Activated T-helper 1 cell treated with anti-CD3 and anti-CD28 coated beads, Interleukin-12 subunit alpha, Interleukin-12 subunit beta, Interleukin-2, Interleukin-4 antibody, amounts not matched to agents 30 ng/mL and 10 ng/mL and 1 ng/mL, durations not matched to agents 14 hours and 24 hours and 36 hours (primary cell): ENCODE measurements at regions of chr5 and their contacts with region 1.

Region 1: GRCh38 chr5:54719384-54720283 is 202.1 kb downstream of the SNX18 start:
- DNase-seq: no peak
- H3K4me3 Mint-ChIP-seq: no peak overlapping the region
- H3K27ac Mint-ChIP-seq: peak overlapping the region; percentile 80
- H3K4me1 Mint-ChIP-seq: peaks cover 46% of the 10 kb centered on the region
- H3K27me3 Mint-ChIP-seq: no peaks in the 10 kb centered on the region

Region 2: DNA sequence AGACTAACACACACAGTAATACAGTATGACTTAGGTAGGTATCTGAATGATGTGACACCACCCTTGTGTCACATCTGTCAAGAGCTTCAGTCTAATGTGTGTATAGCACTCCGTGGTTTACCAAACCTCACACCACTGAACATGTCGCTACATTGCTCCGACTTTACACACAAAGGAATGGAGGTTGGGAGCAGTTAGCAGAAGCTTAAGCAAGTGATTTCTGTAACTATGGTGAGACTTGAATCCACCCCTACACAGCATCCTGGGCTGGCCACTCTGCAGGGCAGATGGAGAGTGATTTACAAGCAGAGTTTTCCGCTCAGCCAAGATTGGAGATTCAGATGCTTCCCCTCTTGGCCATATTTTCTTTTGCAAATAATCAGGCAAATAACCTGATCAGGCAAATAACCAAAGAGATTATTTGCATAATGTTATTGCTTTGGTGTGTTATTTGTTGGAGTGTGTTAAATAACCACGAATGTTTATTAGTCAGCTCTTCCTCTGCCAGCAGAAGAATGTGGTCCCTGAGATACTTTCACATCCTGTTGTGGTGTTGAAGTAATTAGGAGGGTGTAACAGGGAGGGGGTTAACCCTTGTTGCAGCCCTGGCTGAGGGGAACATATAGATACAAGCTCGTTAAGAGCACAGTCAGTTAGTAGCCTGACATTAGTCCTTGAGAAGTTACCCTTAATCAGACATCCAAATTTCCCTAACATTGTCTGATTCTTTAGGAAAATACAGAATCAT is 109.3 kb before region 1 on chr5:
- intact Hi-C with region 1: loop called (anchors 1 kb)
- DNase-seq: peak; percentile 41
- H3K4me3 Mint-ChIP-seq: peak overlapping the region; percentile 68
- H3K27ac Mint-ChIP-seq: peak overlapping the region; percentile 92
- H3K4me1 Mint-ChIP-seq: peaks cover 27% of the 10 kb centered on the region
- H3K27me3 Mint-ChIP-seq: peaks cover 3% of the 10 kb centered on the region

Region 3: GRCh38 chr5:54673523-54674225 is 46.0 kb before region 1 on chr5:
- intact Hi-C with region 1: loop called (anchors 5 kb)
- DNase-seq: peak; percentile 41
- H3K4me3 Mint-ChIP-seq: peak overlapping the region; percentile 54
- H3K27ac Mint-ChIP-seq: peak overlapping the region; percentile 77
- H3K4me1 Mint-ChIP-seq: peaks cover 78% of the 10 kb centered on the region
- H3K27me3 Mint-ChIP-seq: no peaks in the 10 kb centered on the region

Region 4: GRCh38 chr5:54703133-54703532 is 16.5 kb before region 1 on chr5:
- intact Hi-C with region 1: no loop called
- DNase-seq: no peak
- H3K4me3 Mint-ChIP-seq: no peak overlapping the region
- H3K27ac Mint-ChIP-seq: no peak overlapping the region
- H3K4me1 Mint-ChIP-seq: peaks cover 31% of the 10 kb centered on the region
- H3K27me3 Mint-ChIP-seq: peaks cover 10% of the 10 kb centered on the region

Region 5: DNA sequence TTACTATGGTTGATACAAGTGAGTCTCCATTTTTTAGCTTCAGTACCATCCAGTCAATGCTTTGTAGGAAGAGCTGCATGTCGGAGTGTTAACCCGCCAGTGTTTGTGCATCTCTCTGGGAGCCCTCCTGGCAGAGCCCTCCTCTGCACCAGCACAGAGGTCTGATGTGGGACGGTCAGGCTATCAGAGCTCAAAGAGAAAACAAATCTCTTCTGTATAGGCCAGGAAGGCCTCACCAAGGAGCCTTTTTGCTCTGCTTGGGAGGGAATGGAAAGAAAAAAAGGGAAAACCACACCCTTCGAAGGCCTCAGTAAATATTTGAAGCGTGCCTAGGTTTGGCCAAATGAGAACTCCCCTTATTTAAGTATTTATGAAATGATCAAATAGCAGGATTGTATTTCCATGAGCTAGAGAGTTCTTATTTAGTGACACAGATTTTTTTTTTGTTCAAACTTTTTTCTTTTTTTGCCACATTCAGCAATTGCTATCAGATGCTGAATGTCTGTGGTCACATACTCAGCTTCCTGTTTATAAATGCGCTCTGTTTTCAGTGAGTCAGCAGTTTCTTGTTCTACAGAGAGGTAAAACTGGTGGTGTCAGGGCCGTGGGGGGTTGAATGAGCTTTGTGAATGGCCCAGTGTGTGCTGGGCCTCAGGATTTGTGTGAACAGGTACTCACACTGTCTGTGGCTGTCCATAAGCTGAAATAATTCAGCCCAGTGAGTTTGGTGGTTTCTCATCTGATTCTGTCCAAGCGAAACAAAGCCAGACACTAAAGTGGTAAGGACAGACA is 24.6 kb after region 1 on chr5:
- intact Hi-C with region 1: loop called (anchors 1 kb)
- DNase-seq: peak; percentile 63
- H3K4me3 Mint-ChIP-seq: peak overlapping the region; percentile 50
- H3K27ac Mint-ChIP-seq: peak overlapping the region; percentile 87
- H3K4me1 Mint-ChIP-seq: peaks cover 20% of the 10 kb centered on the region
- H3K27me3 Mint-ChIP-seq: no peaks in the 10 kb centered on the region

Region 6: DNA sequence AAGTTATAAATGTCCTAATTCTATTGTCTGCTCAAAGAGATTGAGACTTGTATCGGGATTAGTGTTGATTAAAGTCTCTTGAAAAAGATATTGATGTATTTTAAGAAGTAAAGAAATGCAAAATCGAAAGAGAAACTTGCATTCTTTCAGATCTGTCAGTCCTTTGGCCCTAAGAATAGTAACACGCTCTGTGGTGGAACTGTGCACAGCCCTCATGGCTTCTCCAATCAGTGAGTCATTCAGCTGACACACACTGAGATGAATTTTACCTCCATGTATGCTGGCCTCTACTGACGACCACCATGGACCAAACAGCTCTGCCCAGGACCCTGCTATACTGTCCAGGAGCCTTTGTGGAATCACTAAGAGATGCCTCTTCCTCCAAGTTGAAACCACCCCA is 33.4 kb after region 1 on chr5:
- intact Hi-C with region 1: loop called (anchors 2 kb)
- DNase-seq: peak; percentile 42
- H3K4me3 Mint-ChIP-seq: peak overlapping the region; percentile 47
- H3K27ac Mint-ChIP-seq: peak overlapping the region; percentile 80
- H3K4me1 Mint-ChIP-seq: peaks cover 55% of the 10 kb centered on the region
- H3K27me3 Mint-ChIP-seq: no peaks in the 10 kb centered on the region

Region 7: GRCh38 chr5:54792611-54793404 is 73.2 kb after region 1 on chr5:
- intact Hi-C with region 1: loop called (anchors 1 kb)
- DNase-seq: no peak
- H3K4me3 Mint-ChIP-seq: peak overlapping the region; percentile 32
- H3K27ac Mint-ChIP-seq: peak overlapping the region; percentile 91
- H3K4me1 Mint-ChIP-seq: peaks cover 47% of the 10 kb centered on the region
- H3K27me3 Mint-ChIP-seq: peaks cover 3% of the 10 kb centered on the region

Region 8: DNA sequence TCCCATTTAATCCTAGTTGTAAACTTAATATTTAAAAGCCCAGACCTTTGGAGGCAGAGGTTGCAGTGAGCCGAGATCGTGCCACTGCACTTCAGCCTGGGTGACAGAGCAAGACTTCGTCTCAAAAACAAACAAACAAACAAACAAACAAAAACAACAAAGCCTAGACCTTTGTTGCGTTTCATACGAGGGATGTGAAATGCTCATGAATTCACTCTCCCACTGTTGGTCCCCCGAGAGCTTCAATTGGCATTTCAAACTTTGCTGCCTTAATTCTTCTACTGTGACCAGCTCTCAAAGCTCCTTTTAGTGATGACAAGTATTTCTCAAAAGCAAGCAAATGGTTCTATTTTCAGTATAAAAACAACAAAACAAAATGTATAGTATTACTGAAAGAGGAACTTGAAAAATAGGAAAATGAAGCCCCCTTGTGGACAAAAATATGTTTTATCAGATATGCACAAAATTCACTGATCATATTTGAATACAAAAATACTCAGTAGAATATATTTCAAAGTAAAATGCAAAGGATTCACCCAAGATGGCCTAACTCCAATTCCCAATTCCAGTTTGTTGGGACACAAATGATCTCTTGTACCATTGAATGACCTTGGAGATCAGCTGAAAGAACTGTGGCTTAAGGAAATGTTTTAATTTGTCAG is 125.4 kb after region 1 on chr5:
- intact Hi-C with region 1: loop called (anchors 1 kb)
- DNase-seq: no peak
- H3K4me3 Mint-ChIP-seq: no peak overlapping the region
- H3K27ac Mint-ChIP-seq: peak overlapping the region; percentile 59
- H3K4me1 Mint-ChIP-seq: peaks cover 32% of the 10 kb centered on the region
- H3K27me3 Mint-ChIP-seq: peaks cover 14% of the 10 kb centered on the region

Region 9: GRCh38 chr5:54996466-54996865 is 276.8 kb after region 1 on chr5:
- intact Hi-C with region 1: no loop called
- DNase-seq: no peak
- H3K4me3 Mint-ChIP-seq: no peak overlapping the region
- H3K27ac Mint-ChIP-seq: no peak overlapping the region
- H3K4me1 Mint-ChIP-seq: peaks cover 16% of the 10 kb centered on the region
- H3K27me3 Mint-ChIP-seq: no peaks in the 10 kb centered on the region

Region 10: DNA sequence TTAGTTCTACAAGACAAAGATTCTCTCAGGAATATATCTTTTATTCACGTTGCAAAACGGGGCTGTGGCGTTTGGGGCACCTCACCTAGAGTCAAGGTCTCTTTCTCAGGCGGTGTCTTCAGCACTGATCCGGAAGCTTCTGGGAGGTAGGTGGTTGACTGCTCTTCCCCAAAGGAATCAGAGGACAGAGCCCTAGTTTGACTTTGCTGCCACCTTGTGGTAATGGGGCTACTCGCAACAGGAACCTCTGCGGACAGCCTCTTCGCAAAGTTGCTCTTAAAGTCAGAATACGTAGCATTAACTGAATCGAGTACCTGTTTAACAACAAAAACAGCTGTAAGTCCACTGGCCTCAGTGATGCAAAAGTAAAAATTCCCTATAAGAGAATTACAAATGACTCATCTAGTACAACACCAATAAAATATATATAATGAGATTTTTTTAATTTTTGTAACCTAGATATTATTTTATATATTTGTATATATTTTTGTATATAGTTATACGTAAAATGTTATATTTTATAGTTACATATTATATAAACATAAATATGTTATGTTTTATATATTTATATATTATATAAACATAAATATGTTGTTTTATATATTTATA is 427.0 kb after region 1 on chr5:
- intact Hi-C with region 1: no loop called
- DNase-seq: peak; percentile 82
- H3K4me3 Mint-ChIP-seq: peak overlapping the region; percentile 20
- H3K27ac Mint-ChIP-seq: no peak overlapping the region
- H3K4me1 Mint-ChIP-seq: peaks cover 31% of the 10 kb centered on the region
- H3K27me3 Mint-ChIP-seq: peaks cover 17% of the 10 kb centered on the region

Region 11: DNA sequence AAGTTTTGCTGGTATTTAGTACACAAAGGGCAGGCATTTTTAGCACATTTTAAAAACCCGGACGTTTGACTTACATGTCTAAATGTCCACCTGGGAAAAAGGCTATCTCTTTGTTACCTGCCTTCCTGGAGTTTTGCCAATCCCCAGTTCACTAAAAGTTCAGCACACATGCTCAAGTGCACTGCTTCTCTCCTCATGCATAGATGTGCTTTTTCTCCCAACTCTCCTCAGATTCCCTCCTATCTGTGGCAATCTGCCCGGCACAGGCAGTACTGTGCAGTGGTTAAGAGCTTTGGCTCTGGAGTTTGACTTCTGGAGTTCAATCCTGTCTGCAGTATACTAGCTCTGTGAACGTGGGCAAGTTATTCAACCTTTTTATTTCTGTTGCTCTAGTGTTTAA is 522.1 kb after region 1 on chr5:
- intact Hi-C with region 1: no loop called
- DNase-seq: no peak
- H3K4me3 Mint-ChIP-seq: no peak overlapping the region
- H3K27ac Mint-ChIP-seq: no peak overlapping the region
- H3K4me1 Mint-ChIP-seq: no peaks in the 10 kb centered on the region
- H3K27me3 Mint-ChIP-seq: peaks cover 43% of the 10 kb centered on the region